ENCODE measurements at regions of chr10 and their contacts with region 1.

Region 1: DNA sequence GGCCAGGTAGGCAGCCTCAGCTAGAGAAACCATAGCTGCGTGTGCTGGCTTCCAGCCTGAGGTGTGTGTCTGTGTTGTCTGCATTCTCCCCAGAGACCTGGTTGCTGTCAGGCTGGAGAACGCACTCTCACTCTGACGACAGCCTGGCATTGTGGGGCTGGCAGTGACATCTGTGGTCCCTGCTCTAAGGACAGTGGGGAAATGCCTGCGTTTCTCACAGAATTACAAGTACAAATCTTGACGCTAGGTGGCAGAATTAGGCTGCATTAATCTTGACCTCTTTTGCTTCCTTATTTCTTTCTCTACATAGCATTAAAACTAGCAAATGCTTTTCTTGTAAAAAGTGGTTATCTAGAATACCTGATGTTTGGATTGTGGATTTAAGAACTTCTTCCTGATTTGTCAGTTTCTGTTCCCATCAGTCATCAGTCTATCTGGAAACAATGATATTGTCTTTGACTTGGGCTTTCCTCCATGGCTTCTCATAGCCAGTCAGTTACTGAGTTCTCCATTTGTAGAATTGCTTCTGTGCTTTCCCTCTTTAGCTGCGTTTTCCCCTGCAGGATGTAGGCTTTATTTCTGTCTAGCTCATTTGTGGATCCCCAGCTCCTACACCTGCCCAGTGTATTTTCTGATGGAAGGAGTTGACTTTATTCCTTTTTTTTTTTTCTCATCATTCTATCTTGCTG is 86.0 kb downstream of the FANK1 start:
- DNase-seq: no peak
- H3K4me3 ChIP-seq: no peak overlapping the region
- H3K27ac ChIP-seq: no peak overlapping the region
- H3K4me1 ChIP-seq: peaks cover 0 to 6% (median 0%) of the 10 kb centered on the region in 6 donors
- H3K27me3 ChIP-seq: peaks cover 0 to 10% (median 0%) of the 10 kb centered on the region in 7 donors
- CTCF ChIP-seq: peak; percentile 26 to 85 (median 68)
- POLR2A ChIP-seq: no peak

Region 2: DNA sequence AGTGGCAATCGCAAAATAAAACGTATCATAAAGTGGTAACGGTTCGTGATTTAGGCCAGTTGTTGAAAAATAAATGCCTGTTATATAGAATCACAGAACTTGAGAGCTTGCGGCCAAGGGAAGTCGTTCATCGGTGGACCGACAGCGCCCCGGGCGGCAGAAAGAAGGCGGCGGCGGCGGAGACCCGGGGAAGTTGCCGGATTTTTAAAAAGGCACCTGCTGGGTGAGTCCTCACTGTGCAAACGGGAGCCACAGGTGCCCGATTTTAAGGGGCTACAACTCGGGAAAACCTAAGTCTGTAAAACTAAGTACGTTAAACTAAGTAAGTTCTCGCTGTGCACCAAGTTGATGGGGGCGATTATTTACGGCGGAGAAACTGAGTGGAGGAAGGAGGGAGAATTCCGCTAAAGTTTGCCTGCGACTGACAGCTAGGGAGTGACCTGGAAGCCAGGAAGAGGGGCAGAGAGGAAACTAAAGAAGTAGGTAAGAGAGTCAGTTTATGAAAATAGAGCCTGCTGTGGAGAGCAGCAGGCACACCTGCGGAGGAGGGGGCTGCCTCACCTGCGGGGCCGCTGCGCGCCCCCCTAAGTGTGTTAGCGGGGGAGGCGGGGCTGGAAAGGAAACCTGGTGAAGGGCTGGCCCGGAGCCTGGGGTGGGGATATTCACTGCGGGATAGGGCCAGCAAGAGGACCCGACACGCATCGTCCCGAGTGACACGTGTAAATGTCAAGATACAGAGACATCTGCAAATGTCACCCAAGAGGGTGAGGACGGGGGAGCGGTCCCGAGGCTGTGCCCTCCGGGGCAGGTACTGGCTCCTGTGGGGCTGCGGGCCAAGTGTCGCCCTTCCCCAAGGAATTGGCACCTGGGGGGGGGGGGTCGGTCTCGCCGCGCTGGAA is 404.9 kb after region 1 on chr10:
- intact Hi-C with region 1: loop called (anchors 5 kb)
- DNase-seq: no peak
- H3K4me3 ChIP-seq: peak overlapping the region in 7 of 8 donors; percentile 25 to 61 (median 39)
- H3K27ac ChIP-seq: peak overlapping the region in 3 of 8 donors; percentile 24 to 42 (median 37)
- H3K4me1 ChIP-seq: peaks cover 5 to 29% (median 13%) of the 10 kb centered on the region in 6 donors
- H3K27me3 ChIP-seq: peaks cover 0 to 58% (median 21%) of the 10 kb centered on the region in 7 donors
- CTCF ChIP-seq: peak in 9 of 11 experiments; percentile 42 to 75 (median 51)
- POLR2A ChIP-seq: no peak

Region 3: GRCh38 chr10:126504063-126504739 is 521.8 kb after region 1 on chr10:
- intact Hi-C with region 1: loop called (anchors 2 kb)
- DNase-seq: no peak
- H3K4me3 ChIP-seq: no peak overlapping the region
- H3K27ac ChIP-seq: no peak overlapping the region
- H3K4me1 ChIP-seq: no peaks in the 10 kb centered on the region
- H3K27me3 ChIP-seq: peaks cover 0 to 13% (median 0%) of the 10 kb centered on the region in 7 donors
- CTCF ChIP-seq: peak; percentile 29 to 65 (median 58)
- POLR2A ChIP-seq: no peak